PC-3 (cell line): ENCODE measurements at regions of chr1 and their contacts with region 1.

Region 1: DNA sequence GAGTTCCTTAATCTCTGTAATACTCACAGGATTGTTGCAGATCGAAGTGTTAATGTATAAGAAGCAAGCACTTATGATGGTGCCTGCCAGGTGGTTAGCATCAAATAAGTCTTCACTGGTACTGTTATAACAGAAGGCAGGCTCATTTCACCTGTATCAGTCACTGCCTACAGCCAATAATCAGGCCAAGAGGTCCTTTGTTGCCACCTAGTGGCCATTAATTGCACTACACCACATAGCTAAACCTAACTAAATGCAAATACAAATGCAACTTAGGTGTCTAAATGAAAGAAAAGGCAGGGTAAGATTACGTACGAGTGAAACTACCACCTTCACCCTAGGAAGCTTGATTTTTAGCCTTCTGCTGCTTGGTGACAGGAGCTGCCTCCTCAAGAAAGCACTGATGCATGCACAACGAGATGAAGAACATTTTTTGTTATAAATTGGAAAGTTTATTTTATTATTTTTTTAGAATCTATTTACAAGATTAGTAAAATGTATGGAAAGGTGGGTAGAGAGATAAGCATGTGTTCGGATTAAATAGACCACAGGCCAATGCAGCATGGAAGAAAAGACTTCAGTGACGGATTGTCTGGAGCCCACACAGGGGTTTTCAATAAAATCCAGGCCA is 334.8 kb upstream of the CAMK1G start:
- DNase-seq: peak; percentile 97
- ATAC-seq: peak; percentile 58
- H3K4me3 ChIP-seq: no peak overlapping the region
- H3K27ac ChIP-seq: no peak overlapping the region
- H3K4me1 ChIP-seq: peaks cover 44% of the 10 kb centered on the region
- H3K27me3 ChIP-seq: no peaks in the 10 kb centered on the region
- CTCF ChIP-seq: peak; percentile 98

Region 2: GRCh38 chr1:209023790-209024189 is 225.0 kb before region 1 on chr1:
- CTCF ChIA-PET with region 1: no interaction called
- POLR2A ChIA-PET with region 1: no interaction called
- intact Hi-C with region 1: no loop called
- DNase-seq: no peak
- ATAC-seq: no peak
- H3K4me3 ChIP-seq: no peak overlapping the region
- H3K27ac ChIP-seq: no peak overlapping the region
- H3K4me1 ChIP-seq: no peaks in the 10 kb centered on the region
- H3K27me3 ChIP-seq: no peaks in the 10 kb centered on the region
- CTCF ChIP-seq: no peak

Region 3: GRCh38 chr1:209318181-209319056 is 69.7 kb after region 1 on chr1:
- CTCF ChIA-PET with region 1: no interaction called
- POLR2A ChIA-PET with region 1: no interaction called
- intact Hi-C with region 1: loop called (anchors 2 kb)
- DNase-seq: peak; percentile 97
- ATAC-seq: peak; percentile 87
- H3K4me3 ChIP-seq: peak overlapping the region; percentile 37
- H3K27ac ChIP-seq: peak overlapping the region; percentile 93
- H3K4me1 ChIP-seq: peaks cover 35% of the 10 kb centered on the region
- H3K27me3 ChIP-seq: no peaks in the 10 kb centered on the region
- CTCF ChIP-seq: no peak

Region 4: GRCh38 chr1:209490013-209490412 is 241.2 kb after region 1 on chr1:
- CTCF ChIA-PET with region 1: interaction called, 7 read pairs
- POLR2A ChIA-PET with region 1: no interaction called
- intact Hi-C with region 1: loop called (anchors 1 kb)
- DNase-seq: peak; percentile 82
- ATAC-seq: peak; percentile 83
- H3K4me3 ChIP-seq: no peak overlapping the region
- H3K27ac ChIP-seq: no peak overlapping the region
- H3K4me1 ChIP-seq: peaks cover 14% of the 10 kb centered on the region; the same call in 1 of the 2 replicates
- H3K27me3 ChIP-seq: no peaks in the 10 kb centered on the region
- CTCF ChIP-seq: peak; percentile 94

Region 5: GRCh38 chr1:209565759-209566678 is 317.3 kb after region 1 on chr1:
- CTCF ChIA-PET with region 1: no interaction called
- POLR2A ChIA-PET with region 1: no interaction called
- intact Hi-C with region 1: loop called (anchors 5 kb)
- DNase-seq: peak; percentile 97
- ATAC-seq: peak; percentile 90
- H3K4me3 ChIP-seq: no peak overlapping the region
- H3K27ac ChIP-seq: no peak overlapping the region
- H3K4me1 ChIP-seq: peaks cover 22% of the 10 kb centered on the region
- H3K27me3 ChIP-seq: no peaks in the 10 kb centered on the region
- CTCF ChIP-seq: peak; percentile 96